ENCODE measurements at regions of chr2 and their contacts with region 1.

Region 1: GRCh38 chr2:26503231-26503880 is 25.4 kb upstream of the OTOF start:
- DNase-seq: peak; percentile 71 to 87
- ATAC-seq: peak; percentile 96 to 99 (median 98)
- H3K4me3 ChIP-seq: peak overlapping the region; percentile 46
- H3K27ac ChIP-seq: no peak overlapping the region
- H3K4me1 ChIP-seq: no peaks in the 10 kb centered on the region
- H3K27me3 ChIP-seq: peaks cover 0 to 6% (median 0%) of the 10 kb centered on the region in 3 donors
- CTCF ChIP-seq: peak; percentile 72

Region 2: GRCh38 chr2:26345545-26346453 is 157.6 kb before region 1 on chr2 and contains the start of gene SELENOI:
- intact Hi-C with region 1: loop called in 1 of 2 experiments (anchors 5 kb)
- DNase-seq: peak; percentile 98 to 99
- ATAC-seq: peak; percentile 96 to 97 (median 97)
- H3K4me3 ChIP-seq: peak within 1 kb of the TSS; percentile 91
- H3K27ac ChIP-seq: peak within 1 kb of the TSS; percentile 93
- H3K4me1 ChIP-seq: peaks cover 30% of the 10 kb centered on the region
- H3K27me3 ChIP-seq: no peaks in the 10 kb centered on the region
- CTCF ChIP-seq: no peak
- total RNA-seq, gene SELENOI: 15.7 to 40.5 (median 20.1) TPM

Region 3: DNA sequence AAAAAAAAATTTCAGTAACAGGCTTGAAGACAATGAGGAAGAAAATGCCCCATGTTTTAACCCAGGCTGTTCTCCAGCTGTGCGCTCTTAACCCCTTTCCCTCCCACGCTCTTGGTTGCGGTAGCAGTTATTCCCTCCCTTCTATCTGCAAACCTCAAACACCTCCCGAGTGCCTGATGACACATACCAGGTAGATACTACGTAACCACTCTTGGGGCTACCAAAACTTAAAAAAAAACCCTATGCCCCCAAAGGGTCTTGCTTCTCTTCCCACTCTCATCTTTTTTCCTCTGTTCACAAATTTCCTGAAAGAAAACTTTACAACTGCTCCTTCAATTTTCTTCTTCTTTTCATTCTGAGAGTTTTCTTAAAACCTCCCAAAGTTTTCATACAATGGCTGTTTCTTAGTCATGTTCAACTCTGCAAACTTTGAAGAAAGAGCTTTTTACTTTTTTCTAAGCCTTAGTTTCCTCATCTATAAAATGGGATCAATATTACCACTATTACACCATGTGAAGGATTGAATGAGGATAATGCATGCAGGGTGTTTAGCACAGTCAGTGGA is 106.5 kb before region 1 on chr2:
- intact Hi-C with region 1: loop called in 1 of 2 experiments (anchors 5 kb)
- DNase-seq: no peak
- ATAC-seq: no peak
- H3K4me3 ChIP-seq: no peak overlapping the region
- H3K27ac ChIP-seq: no peak overlapping the region
- H3K4me1 ChIP-seq: no peaks in the 10 kb centered on the region
- H3K27me3 ChIP-seq: peaks cover 0 to 7% (median 0%) of the 10 kb centered on the region in 3 donors
- CTCF ChIP-seq: no peak

Region 4: GRCh38 chr2:26577434-26578112 is 74.2 kb after region 1 on chr2:
- intact Hi-C with region 1: loop called in 1 of 2 experiments (anchors 2 kb)
- DNase-seq: peak; percentile 62 to 79
- ATAC-seq: peak; percentile 87 to 93 (median 90)
- H3K4me3 ChIP-seq: no peak overlapping the region
- H3K27ac ChIP-seq: no peak overlapping the region
- H3K4me1 ChIP-seq: no peaks in the 10 kb centered on the region
- H3K27me3 ChIP-seq: peaks cover 0 to 9% (median 3%) of the 10 kb centered on the region in 3 donors
- CTCF ChIP-seq: peak; percentile 97

Measured in psoas muscle (tissue), 8 donors.